Activated naive CD4-positive, alpha-beta T cell treated with anti-CD3 and anti-CD28 coated beads for 36 hours (primary cell): ENCODE measurements at regions of chr5 and their contacts with region 1.

Region 1: GRCh38 chr5:157328277-157328912 is 62.5 kb downstream of the CYFIP2 start:
- DNase-seq: peak; percentile 69
- H3K4me3 Mint-ChIP-seq: peak overlapping the region; percentile 31
- H3K27ac Mint-ChIP-seq: peak overlapping the region; percentile 78
- H3K4me1 Mint-ChIP-seq: peaks cover 51% of the 10 kb centered on the region
- H3K27me3 Mint-ChIP-seq: no peaks in the 10 kb centered on the region

Region 2: DNA sequence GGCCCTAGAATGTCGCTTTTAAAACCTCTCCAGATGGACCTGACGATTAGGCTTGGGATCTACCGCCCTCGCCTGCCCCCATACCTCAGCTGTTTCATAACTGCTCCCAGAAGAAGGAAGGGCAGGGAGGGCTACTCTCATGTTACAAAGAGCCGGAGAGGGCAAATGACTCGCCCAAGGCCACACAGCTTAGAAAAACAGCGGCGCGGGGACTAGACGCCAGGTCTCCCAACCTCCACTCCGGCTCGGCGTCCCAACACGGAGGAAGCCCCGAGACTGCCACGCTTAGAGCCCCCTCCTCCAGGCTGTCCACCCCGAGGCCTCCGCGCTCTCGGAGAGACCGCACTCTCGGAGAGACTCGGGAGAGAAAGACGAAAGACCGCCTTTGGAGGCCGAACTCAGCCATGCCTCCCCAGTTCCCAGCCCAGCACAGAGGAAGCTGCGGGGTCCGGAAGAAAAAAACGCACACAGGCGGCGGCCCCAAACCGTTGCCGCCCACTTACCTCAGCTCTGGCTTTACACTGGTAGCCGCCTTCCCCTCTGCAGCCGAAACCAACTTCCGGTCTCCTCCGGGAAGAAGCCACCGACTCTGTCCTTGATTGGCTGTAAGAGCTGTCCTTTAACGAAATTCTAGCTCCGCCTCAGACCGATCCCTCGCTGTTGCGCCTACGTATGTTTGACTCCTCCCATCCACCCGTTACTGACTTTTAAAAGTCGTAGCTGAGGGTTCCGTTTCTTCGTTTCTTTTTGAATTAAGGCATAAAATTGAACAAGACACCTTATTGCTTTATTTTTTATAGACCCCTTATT is 185.9 kb before region 1 on chr5 and contains the start of gene MED7:
- CTCF ChIA-PET with region 1: interaction called, 8 read pairs
- intact Hi-C with region 1: loop called (anchors 1 kb)
- DNase-seq: peak; percentile 97
- H3K4me3 Mint-ChIP-seq: peak within 1 kb of the TSS; percentile 94
- H3K27ac Mint-ChIP-seq: peak within 1 kb of the TSS; percentile 98
- H3K4me1 Mint-ChIP-seq: peaks cover 38% of the 10 kb centered on the region
- H3K27me3 Mint-ChIP-seq: no peaks in the 10 kb centered on the region
- total RNA-seq, gene MED7: 21.0 to 21.2 TPM

Region 3: DNA sequence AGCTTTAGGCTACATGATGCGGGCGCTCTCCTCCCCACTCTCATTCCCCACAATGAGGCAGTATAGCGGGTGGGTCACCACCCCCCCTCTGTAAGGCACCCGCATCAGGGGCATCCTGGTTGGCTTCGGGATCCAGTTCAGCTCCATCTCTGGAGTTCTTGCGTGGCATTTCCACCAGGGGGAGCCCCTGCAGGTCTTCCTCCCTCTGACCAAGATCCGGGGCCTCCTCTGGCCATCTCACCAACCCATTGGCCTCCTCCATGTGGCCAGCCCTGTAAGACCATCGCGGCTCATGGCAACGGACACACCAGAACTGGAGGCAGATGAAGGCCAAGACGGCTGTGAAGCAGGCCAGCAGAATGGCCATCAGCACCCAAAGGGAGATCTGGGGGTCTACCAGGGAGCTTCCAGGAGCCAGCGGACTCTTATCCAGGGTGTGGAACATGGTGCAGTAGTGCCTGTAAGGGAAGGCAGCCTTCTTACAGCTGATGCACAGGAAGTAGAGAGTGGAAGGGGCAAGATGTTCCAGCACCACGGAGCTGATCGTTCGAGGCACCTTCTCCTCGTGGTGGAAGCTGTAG is 14.5 kb after region 1 on chr5:
- CTCF ChIA-PET with region 1: interaction called, 81 read pairs
- intact Hi-C with region 1: no loop called
- DNase-seq: peak; percentile 51
- H3K4me3 Mint-ChIP-seq: no peak overlapping the region
- H3K27ac Mint-ChIP-seq: no peak overlapping the region
- H3K4me1 Mint-ChIP-seq: peaks cover 38% of the 10 kb centered on the region
- H3K27me3 Mint-ChIP-seq: no peaks in the 10 kb centered on the region

Region 4: GRCh38 chr5:157431544-157432200 is 103.3 kb after region 1 on chr5:
- CTCF ChIA-PET with region 1: interaction called, 8 read pairs
- intact Hi-C with region 1: loop called (anchors 1 kb)
- DNase-seq: peak; percentile 41
- H3K4me3 Mint-ChIP-seq: no peak overlapping the region
- H3K27ac Mint-ChIP-seq: no peak overlapping the region
- H3K4me1 Mint-ChIP-seq: peaks cover 3% of the 10 kb centered on the region
- H3K27me3 Mint-ChIP-seq: peaks cover 9% of the 10 kb centered on the region

Region 5: DNA sequence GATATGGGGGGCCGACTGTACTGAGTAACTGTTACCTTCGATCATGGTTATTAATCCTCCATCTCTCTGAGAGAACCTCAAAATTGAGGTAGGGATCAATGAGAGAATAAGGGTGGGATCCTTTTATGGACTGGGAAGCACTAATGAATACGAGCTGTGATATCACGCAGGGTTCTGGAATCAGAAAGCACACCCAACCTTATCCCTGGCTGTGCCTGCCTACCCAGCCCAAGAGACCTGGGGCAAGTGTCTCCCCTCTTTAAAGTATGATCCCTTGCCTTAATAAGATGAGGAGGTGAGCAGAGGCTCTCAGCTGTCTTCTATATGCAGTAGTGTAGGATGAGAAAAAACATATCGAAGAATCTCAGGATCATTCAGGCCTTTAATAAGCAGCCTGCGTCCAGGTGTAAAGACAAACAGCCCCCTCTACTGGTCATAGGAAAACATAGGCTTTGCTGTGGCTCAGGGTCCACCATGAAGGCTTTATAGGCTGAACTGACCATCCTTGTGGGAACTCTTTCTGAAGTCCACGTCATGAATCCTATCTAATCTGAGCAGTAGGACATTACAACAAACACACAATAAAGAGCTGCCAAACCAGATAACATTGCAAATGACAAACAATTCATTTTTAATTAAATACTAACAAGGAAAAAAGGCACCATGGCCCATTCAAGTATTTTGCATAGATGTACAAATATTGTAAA is 148.5 kb after region 1 on chr5:
- CTCF ChIA-PET with region 1: interaction called, 21 read pairs
- intact Hi-C with region 1: loop called (anchors 1 kb)
- DNase-seq: peak; percentile 59
- H3K4me3 Mint-ChIP-seq: no peak overlapping the region
- H3K27ac Mint-ChIP-seq: no peak overlapping the region
- H3K4me1 Mint-ChIP-seq: no peaks in the 10 kb centered on the region
- H3K27me3 Mint-ChIP-seq: no peaks in the 10 kb centered on the region

Region 6: GRCh38 chr5:157718519-157718918 is 390.1 kb after region 1 on chr5:
- CTCF ChIA-PET with region 1: interaction called, 5 read pairs
- intact Hi-C with region 1: loop called (anchors 1 kb)
- DNase-seq: no peak
- H3K4me3 Mint-ChIP-seq: no peak overlapping the region
- H3K27ac Mint-ChIP-seq: no peak overlapping the region
- H3K4me1 Mint-ChIP-seq: peaks cover 25% of the 10 kb centered on the region
- H3K27me3 Mint-ChIP-seq: no peaks in the 10 kb centered on the region